Spleen (tissue), 13 donors: ENCODE measurements at regions of chr13 and their contacts with region 1.

Region 1: DNA sequence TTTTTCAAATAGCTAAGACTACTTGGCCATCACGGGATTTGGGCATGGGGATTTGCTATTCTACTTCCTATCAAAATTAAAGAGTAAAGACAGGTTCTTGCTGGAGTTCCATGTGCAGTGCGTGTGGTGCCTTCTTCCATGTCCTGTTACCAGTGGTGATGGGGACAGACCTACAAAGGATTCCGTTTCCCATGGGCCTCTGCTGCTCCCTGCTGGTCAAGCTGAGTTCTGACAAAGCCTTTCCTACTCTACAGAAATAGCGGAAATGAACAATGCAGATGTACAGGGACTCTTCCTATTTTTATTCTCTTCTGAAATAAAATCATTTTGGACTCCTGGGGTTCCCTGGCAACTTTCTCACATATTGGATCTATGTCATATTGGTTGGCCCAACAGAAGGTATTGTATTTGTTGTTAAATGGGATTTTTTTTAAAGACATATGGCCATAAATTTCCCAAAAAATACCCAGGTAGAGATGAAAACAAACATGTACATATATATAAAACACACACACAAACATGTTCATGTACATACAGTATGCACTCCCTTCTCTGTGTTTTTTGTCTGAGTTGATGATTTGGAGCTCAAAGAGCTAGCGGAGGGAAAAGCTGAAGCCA is 90.5 kb upstream of the SLC15A1 start:
- DNase-seq: peak; percentile 84
- H3K4me3 ChIP-seq: no peak overlapping the region
- H3K27ac ChIP-seq: no peak overlapping the region
- H3K4me1 ChIP-seq: peaks cover 0 to 6% (median 0%) of the 10 kb centered on the region in 6 donors
- H3K27me3 ChIP-seq: no peaks in the 10 kb centered on the region
- CTCF ChIP-seq: peak; percentile 54 to 85 (median 79)
- POLR2A ChIP-seq: no peak

Region 2: GRCh38 chr13:99033814-99034213 is 190.8 kb after region 1 on chr13:
- intact Hi-C with region 1: loop called (anchors 10 kb)
- DNase-seq: no peak
- H3K4me3 ChIP-seq: no peak overlapping the region
- H3K27ac ChIP-seq: no peak overlapping the region
- H3K4me1 ChIP-seq: no peaks in the 10 kb centered on the region
- H3K27me3 ChIP-seq: no peaks in the 10 kb centered on the region
- CTCF ChIP-seq: peak in 7 of 11 experiments; percentile 32 to 56 (median 42)
- POLR2A ChIP-seq: no peak